ENCODE measurements at regions of chr20 and their contacts with region 1.

Region 1: DNA sequence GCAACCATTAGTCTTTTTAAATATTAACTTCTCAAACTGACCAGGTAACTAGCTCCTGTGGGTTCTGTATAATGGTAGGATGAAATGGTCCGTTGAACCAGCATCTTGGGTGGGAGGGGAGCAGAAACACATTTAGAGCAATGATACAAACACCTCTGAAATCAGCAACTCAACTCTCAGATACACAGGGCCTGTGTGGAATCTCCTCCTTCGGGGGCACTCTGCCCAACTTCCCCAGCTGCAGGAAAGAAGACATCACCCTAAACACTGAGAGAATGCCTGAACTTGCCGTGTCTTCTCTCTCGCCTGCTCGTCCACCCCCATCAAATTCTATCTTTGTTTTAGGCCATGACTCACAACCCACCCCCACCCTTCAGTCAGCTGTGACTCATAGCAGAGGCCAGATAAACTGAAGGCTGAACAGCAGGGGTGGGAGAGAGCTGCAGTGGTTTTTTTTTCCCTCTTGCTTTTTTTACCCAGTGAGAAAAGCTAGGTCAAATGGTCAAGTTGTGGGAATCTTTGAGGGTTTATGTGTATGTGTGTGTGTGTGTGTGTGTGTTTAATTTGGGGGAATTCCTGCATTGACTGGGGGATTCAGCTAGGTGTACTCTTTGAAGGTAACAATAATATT is 593.4 kb upstream of the JAG1 start:
- DNase-seq: peak; percentile 98
- ATAC-seq: peak; percentile 98
- H3K4me3 ChIP-seq: no peak overlapping the region
- H3K27ac ChIP-seq: peak overlapping the region; percentile 19; the same call in 1 of the 2 replicates
- H3K4me1 ChIP-seq: peaks cover 4% of the 10 kb centered on the region
- H3K27me3 ChIP-seq: no peaks in the 10 kb centered on the region
- CTCF ChIP-seq: peak; percentile 20; the same call in 1 of the 2 replicates
- POLR2A ChIP-seq: no peak
- RAD21 ChIP-seq: peak; percentile 53; the same call in 1 of the 2 replicates

Region 2: DNA sequence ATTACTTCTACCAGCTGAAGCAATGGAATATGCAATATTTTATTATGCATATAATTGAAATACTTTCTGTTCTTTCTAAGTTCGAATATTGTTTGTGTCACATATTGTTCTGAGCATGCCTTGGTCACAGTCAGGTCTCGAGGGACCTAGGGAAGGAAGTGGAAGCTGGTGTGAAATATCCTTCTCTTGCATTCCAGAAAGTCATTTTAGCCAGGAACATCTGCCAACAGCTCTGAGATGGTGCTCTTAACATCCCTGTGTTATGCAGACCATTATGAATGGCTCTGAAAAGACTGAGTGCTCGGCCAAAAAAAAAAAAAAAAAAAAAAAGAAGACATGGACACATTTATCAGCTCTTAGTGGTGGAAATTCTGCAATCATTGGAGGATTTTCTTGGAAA is 460.7 kb before region 1 on chr20:
- CTCF ChIA-PET with region 1: no interaction called
- POLR2A ChIA-PET with region 1: no interaction called
- dilution Hi-C with region 1: no loop called
- in situ Hi-C with region 1: no loop called
- intact Hi-C with region 1: no loop called
- DNase-seq: no peak
- ATAC-seq: no peak
- H3K4me3 ChIP-seq: no peak overlapping the region
- H3K27ac ChIP-seq: no peak overlapping the region
- H3K4me1 ChIP-seq: no peaks in the 10 kb centered on the region
- H3K27me3 ChIP-seq: peaks cover 2% of the 10 kb centered on the region; the same call in 1 of the 2 replicates
- CTCF ChIP-seq: no peak
- POLR2A ChIP-seq: no peak
- RAD21 ChIP-seq: no peak

Region 3: GRCh38 chr20:10982692-10983091 is 284.6 kb before region 1 on chr20:
- CTCF ChIA-PET with region 1: no interaction called
- POLR2A ChIA-PET with region 1: no interaction called
- dilution Hi-C with region 1: no loop called
- in situ Hi-C with region 1: no loop called
- intact Hi-C with region 1: loop called (anchors 10 kb)
- DNase-seq: peak; percentile 94
- ATAC-seq: peak; percentile 99
- H3K4me3 ChIP-seq: no peak overlapping the region
- H3K27ac ChIP-seq: no peak overlapping the region
- H3K4me1 ChIP-seq: peaks cover 4% of the 10 kb centered on the region
- H3K27me3 ChIP-seq: no peaks in the 10 kb centered on the region
- CTCF ChIP-seq: no peak
- POLR2A ChIP-seq: no peak
- RAD21 ChIP-seq: peak; percentile 27

Region 4: DNA sequence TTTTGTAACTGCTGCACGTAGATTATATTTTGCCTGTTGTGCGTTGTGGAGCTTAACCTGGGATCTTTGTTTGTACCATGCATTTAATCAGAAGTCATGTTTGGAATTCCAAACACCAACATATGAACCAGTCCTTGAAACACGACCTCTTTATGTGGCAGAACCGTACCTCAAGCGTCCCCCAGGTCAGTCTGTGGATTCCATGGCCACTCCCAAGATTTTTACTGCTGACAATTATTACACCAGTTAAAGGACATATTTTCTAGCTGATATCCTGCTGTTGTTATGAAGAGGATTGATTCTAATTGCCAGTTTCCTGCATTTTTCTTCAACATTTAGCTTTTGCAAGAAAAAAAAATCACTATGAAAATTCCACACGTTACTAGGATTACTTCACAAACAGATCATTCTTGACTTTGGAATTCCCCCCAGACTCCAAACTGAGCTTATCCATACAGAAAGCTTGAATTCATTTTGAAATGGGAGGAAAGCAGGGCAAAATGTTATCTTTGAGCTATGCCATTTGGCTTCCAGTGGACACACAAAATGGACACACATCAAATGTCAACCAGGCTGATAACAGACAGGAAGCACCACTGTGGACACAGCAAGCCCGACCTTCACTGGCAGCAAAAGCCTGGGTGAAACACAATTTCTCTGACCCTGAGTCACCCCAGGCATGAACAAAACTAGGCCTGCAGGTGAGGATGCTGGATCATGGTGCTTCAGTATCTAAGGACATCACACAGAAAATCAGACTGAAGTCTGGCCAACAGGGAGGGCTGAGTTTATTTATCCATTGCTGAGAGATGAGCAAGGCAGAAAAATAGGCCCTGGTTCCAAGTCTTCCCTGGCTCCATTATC is 50.6 kb before region 1 on chr20:
- CTCF ChIA-PET with region 1: interaction called, 3 read pairs
- POLR2A ChIA-PET with region 1: no interaction called
- dilution Hi-C with region 1: no loop called
- in situ Hi-C with region 1: no loop called
- intact Hi-C with region 1: loop called (anchors 5 kb)
- DNase-seq: peak; percentile 82
- ATAC-seq: peak; percentile 80
- H3K4me3 ChIP-seq: no peak overlapping the region
- H3K27ac ChIP-seq: peak overlapping the region; percentile 85
- H3K4me1 ChIP-seq: peaks cover 12% of the 10 kb centered on the region
- H3K27me3 ChIP-seq: no peaks in the 10 kb centered on the region
- CTCF ChIP-seq: no peak
- POLR2A ChIP-seq: no peak
- RAD21 ChIP-seq: no peak

Region 5: GRCh38 chr20:11411765-11412164 is 144.5 kb after region 1 on chr20:
- CTCF ChIA-PET with region 1: no interaction called
- POLR2A ChIA-PET with region 1: no interaction called
- dilution Hi-C with region 1: no loop called
- in situ Hi-C with region 1: no loop called
- intact Hi-C with region 1: no loop called
- DNase-seq: no peak
- ATAC-seq: no peak
- H3K4me3 ChIP-seq: no peak overlapping the region
- H3K27ac ChIP-seq: no peak overlapping the region
- H3K4me1 ChIP-seq: no peaks in the 10 kb centered on the region
- H3K27me3 ChIP-seq: no peaks in the 10 kb centered on the region
- CTCF ChIP-seq: no peak
- POLR2A ChIP-seq: no peak
- RAD21 ChIP-seq: no peak

Measured in IMR-90 (cell line).